AG04449 (cell line): ENCODE measurements at regions of chr11 and their contacts with region 1.

Region 1: GRCh38 chr11:68213555-68214174 is 569 bp upstream of the KMT5B start:
- DNase-seq: peak; percentile 87
- H3K4me3 ChIP-seq: peak overlapping the region; percentile 92
- CTCF ChIP-seq: no peak

Region 2: DNA sequence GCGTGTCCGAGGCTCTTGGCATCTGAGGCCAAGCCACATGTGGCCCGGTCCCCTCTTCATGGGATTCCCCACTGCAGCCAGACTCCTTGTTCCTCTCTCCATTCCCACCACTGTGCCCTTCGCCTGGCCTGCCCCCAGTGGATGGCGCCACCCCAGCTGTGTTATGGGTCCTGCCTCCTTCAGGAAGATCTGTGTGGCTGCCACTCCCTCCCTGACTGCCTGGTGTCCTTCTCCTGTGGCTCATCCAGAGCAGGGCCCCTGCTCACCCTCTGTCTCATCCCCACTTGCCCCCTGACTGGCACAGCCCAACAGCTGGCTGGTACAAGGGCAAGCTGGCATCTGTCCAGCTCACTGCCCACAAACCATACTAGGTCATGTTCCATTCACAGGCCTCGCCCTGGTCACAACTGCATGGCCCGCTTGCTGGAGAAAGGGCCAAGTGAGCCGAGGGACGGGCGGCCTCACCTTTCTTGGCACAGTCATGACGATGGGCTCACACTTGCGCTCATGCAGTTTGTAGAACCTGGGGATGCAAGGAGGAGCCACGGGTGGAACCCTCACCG is 774.3 kb before region 1 on chr11:
- CTCF ChIA-PET with region 1: no interaction called
- POLR2A ChIA-PET with region 1: no interaction called
- DNase-seq: no peak
- H3K4me3 ChIP-seq: no peak overlapping the region
- CTCF ChIP-seq: peak; percentile 38

Region 3: GRCh38 chr11:68010090-68011041 is 203.3 kb before region 1 on chr11 and contains the start of gene ALDH3B1:
- CTCF ChIA-PET with region 1: interaction called, 42 read pairs
- POLR2A ChIA-PET with region 1: no interaction called
- DNase-seq: no peak
- H3K4me3 ChIP-seq: peak within 1 kb of the TSS; percentile 64
- CTCF ChIP-seq: peak; percentile 10

Region 4: DNA sequence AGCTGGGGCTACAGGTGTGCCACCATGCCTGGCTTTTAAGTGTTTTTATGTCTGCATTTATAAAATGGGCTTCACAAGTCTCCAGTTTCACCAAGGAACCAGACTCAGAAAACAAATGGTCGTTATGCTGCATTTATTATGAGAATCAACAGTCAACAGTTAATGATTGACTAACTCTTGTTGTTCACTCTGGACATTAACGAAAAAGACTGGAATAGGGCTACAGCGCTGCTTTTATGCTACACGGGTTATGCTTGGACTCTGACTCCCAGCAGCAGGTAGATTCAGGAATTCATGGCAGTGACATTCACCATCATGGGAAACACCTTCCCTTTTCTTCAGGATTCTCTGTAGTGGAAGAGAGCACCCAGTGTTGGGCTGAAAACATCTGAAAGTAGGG is 48.1 kb before region 1 on chr11:
- CTCF ChIA-PET with region 1: no interaction called
- POLR2A ChIA-PET with region 1: no interaction called
- DNase-seq: no peak
- H3K4me3 ChIP-seq: no peak overlapping the region
- CTCF ChIP-seq: no peak

Region 5: GRCh38 chr11:68191661-68192579 is 21.7 kb before region 1 on chr11:
- CTCF ChIA-PET with region 1: interaction called, 155 read pairs
- POLR2A ChIA-PET with region 1: interaction called, 3 read pairs
- DNase-seq: no peak
- H3K4me3 ChIP-seq: no peak overlapping the region
- CTCF ChIP-seq: no peak

Region 6: GRCh38 chr11:68226421-68226820 is 12.8 kb after region 1 on chr11:
- CTCF ChIA-PET with region 1: interaction called, 10 read pairs
- POLR2A ChIA-PET with region 1: no interaction called
- DNase-seq: no peak
- H3K4me3 ChIP-seq: no peak overlapping the region
- CTCF ChIP-seq: no peak

Region 7: GRCh38 chr11:68471360-68472340 is 258.0 kb after region 1 on chr11:
- CTCF ChIA-PET with region 1: no interaction called
- POLR2A ChIA-PET with region 1: no interaction called
- DNase-seq: peak; percentile 52
- H3K4me3 ChIP-seq: no peak overlapping the region
- CTCF ChIP-seq: no peak